ENCODE measurements at regions of chr5 and their contacts with region 1.

Region 1: DNA sequence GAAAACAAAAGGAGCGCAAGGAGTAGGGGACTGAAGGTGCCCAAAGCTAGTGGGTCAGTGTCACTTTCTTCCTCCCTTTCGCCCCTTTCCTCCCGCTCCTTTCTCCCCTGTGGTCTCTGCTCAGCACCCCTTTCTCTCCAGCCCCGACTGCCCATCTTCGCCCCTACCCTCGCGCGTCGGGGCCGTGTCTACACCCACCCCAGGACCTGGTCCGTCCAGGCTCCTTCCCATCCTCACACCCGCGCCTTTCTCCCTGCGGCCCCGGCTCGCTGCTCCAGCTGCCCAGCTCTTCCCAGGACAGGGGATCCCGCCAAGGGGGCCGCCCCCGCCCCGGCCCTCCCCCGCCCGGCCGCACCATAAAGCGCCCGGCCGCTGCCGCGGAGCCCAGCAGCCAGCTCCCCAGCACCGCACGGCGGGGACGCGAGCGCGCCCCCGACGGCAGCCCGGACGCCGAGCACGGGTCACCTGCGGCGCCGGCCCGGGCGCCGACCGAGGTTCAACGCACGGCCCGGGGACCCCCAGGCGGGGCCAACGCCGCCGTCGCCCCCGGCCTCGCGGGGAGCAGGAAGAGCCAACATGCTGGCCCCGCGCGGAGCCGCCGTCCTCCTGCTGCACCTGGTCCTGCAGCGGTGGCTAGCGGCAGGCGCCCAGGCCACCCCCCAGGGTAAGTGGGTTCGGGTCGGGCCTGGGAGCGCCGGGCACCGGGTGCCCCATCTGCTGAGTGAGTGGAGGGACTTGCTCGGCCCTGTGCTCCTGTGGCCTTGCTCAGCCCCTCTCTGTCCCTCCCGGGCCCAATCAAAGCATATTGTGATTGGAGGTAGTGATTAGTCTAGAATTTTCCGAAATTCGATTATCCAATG is at the start of gene THBS4:
- DNase-seq: peak; percentile 11 to 33
- ATAC-seq: peak; percentile 47 to 88 (median 65)
- H3K4me3 ChIP-seq: peak within 1 kb of the TSS; percentile 15 to 62 (median 52)
- H3K27ac ChIP-seq: peak within 1 kb of the TSS in 9 of 10 donors; percentile 35 to 73 (median 62)
- H3K4me1 ChIP-seq: peaks cover 0 to 7% (median 0%) of the 10 kb centered on the region in 9 donors
- H3K27me3 ChIP-seq: peaks cover 0 to 65% (median 39%) of the 10 kb centered on the region in 7 donors
- CTCF ChIP-seq: no peak
- total RNA-seq, gene THBS4: 41.1 to 180 (median 68.0) TPM

Region 2: DNA sequence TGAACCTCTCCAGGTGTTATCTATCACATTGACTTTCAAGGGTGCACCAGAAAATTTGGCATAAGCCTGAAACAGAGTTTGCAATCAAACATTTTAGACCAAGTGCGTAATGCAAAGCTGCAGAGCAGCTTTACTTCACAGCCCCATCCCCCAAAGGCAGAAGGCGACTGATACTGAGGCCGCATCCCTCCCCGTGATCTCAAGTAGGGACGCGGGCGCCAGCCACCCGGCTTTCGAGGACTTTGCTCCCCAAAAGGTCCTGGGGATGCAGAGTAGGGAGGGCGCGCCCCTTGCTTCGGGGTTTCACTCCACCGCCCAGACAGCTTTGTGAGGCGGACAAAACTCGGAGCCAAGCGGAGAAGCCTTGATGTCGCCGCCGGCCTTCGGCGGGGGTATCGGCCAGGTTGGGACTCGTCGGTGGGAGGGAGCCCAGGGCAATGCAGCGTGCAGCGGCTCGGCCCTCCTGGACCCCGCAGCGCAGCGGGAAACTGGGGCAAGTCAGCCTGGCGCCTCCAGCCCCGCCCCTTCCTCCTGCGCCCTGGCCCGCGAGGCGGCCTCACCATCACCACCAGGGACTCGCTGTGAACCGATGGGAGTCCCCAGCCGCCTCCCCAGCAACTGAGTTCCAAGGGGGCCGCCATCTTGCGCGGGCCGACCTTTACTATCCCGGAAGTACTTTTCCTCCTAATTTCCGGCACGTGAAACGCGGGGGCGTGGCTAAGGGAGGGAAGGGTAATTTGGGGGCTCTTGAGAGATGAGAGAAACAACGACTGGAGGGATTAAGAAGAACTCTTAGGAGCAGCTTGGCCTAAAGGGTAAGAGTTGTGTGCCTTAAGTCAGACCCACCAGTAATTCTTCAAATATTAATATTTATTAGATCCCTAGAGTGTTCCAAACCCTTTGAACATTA is 44.3 kb before region 1 on chr5 and contains the start of gene MTX3:
- intact Hi-C with region 1: loop called in 1 of 10 experiments (anchors 5 kb)
- DNase-seq: peak; percentile 86 to 87
- ATAC-seq: peak; percentile 93 to 97 (median 96)
- H3K4me3 ChIP-seq: peak within 1 kb of the TSS; percentile 63 to 88 (median 82)
- H3K27ac ChIP-seq: peak within 1 kb of the TSS; percentile 45 to 87 (median 80)
- H3K4me1 ChIP-seq: peaks cover 0 to 27% (median 17%) of the 10 kb centered on the region in 9 donors
- H3K27me3 ChIP-seq: no peaks in the 10 kb centered on the region
- CTCF ChIP-seq: no peak
- total RNA-seq, gene MTX3: 10.0 to 14.5 (median 11.6) TPM

Region 3: DNA sequence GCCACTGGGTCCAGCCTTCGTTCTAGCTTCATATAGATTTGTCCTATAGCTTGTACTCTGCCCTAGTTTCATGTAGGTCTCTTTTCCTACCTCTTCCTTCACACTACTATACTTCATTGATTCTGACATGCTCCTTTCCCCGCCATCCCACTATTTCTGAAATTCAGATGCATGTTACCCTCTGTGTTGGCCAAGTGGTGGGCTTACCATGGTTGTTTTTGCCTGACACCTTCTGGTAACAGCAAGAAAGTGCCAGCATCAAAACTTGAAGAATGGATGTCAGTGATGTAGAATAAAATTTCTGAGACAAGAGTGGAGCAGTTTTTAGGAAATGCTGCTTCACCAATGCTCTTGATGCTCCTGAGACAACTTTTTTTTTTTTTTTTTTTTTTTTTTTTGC is 240.2 kb after region 1 on chr5:
- intact Hi-C with region 1: no loop called
- DNase-seq: no peak
- ATAC-seq: peak in 3 of 8 donors; percentile 44 to 57 (median 56)
- H3K4me3 ChIP-seq: no peak overlapping the region
- H3K27ac ChIP-seq: no peak overlapping the region
- H3K4me1 ChIP-seq: peaks cover 0 to 4% (median 0%) of the 10 kb centered on the region in 9 donors
- H3K27me3 ChIP-seq: no peaks in the 10 kb centered on the region
- CTCF ChIP-seq: peak in 8 of 9 donors; percentile 40 to 69 (median 51)

Measured in heart right ventricle (tissue), 16 donors.